IMR-90 (cell line): ENCODE measurements at regions of chr5 and their contacts with region 1.

Region 1: DNA sequence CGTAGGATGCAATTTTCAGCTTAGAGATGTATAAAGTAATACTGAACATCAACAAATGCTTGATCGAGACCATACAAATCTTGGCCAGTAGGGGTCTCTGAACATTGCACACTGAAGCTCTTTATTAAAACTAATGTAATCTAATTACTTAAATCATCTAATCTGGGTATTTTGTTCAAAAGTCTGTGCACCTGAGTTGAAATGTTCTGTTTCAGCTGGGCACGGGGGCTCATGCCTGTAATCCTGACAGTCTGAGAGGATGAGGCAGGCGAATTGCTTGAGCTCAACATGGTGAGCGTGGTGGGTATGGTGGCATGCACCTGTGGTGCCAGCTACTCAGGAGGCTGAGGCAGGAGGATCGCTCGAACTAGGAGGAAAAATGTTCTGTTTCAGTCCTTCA is 41.0 kb downstream of the ESM1 start:
- DNase-seq: peak; percentile 58
- ATAC-seq: peak; percentile 64
- H3K4me3 ChIP-seq: no peak overlapping the region
- H3K27ac ChIP-seq: no peak overlapping the region
- H3K4me1 ChIP-seq: no peaks in the 10 kb centered on the region
- H3K27me3 ChIP-seq: peaks cover 33% of the 10 kb centered on the region
- CTCF ChIP-seq: peak; percentile 76
- POLR2A ChIP-seq: no peak
- RAD21 ChIP-seq: peak; percentile 71

Region 2: GRCh38 chr5:54959673-54960418 is 15.5 kb after region 1 on chr5:
- CTCF ChIA-PET with region 1: interaction called, 13 read pairs
- POLR2A ChIA-PET with region 1: no interaction called
- dilution Hi-C with region 1: no loop called
- in situ Hi-C with region 1: no loop called
- intact Hi-C with region 1: no loop called
- DNase-seq: no peak
- ATAC-seq: no peak
- H3K4me3 ChIP-seq: no peak overlapping the region
- H3K27ac ChIP-seq: no peak overlapping the region
- H3K4me1 ChIP-seq: no peaks in the 10 kb centered on the region
- H3K27me3 ChIP-seq: peaks cover 50% of the 10 kb centered on the region
- CTCF ChIP-seq: 0 out of 2 replicates have a peak, but pooled peaks have one; percentile 22
- POLR2A ChIP-seq: no peak
- RAD21 ChIP-seq: no peak

Region 3: GRCh38 chr5:55146543-55147151 is 202.3 kb after region 1 on chr5:
- CTCF ChIA-PET with region 1: interaction called, 30 read pairs
- POLR2A ChIA-PET with region 1: no interaction called
- dilution Hi-C with region 1: loop called (anchors 25 kb)
- in situ Hi-C with region 1: loop called (anchors 5 kb)
- intact Hi-C with region 1: loop called (anchors 1 kb)
- DNase-seq: peak; percentile 82
- ATAC-seq: peak; percentile 97
- H3K4me3 ChIP-seq: no peak overlapping the region
- H3K27ac ChIP-seq: no peak overlapping the region
- H3K4me1 ChIP-seq: no peaks in the 10 kb centered on the region
- H3K27me3 ChIP-seq: peaks cover 11% of the 10 kb centered on the region
- CTCF ChIP-seq: peak; percentile 98
- POLR2A ChIP-seq: peak; percentile 56; the same call in 1 of the 2 replicates
- RAD21 ChIP-seq: peak; percentile 99

Region 4: GRCh38 chr5:55159763-55160492 is 215.6 kb after region 1 on chr5 and contains the start of gene GPX8:
- CTCF ChIA-PET with region 1: interaction called, 23 read pairs
- POLR2A ChIA-PET with region 1: no interaction called
- dilution Hi-C with region 1: no loop called
- in situ Hi-C with region 1: no loop called
- intact Hi-C with region 1: no loop called
- DNase-seq: peak; percentile 92
- ATAC-seq: peak; percentile 88
- H3K4me3 ChIP-seq: peak within 1 kb of the TSS; percentile 66
- H3K27ac ChIP-seq: peak within 1 kb of the TSS; percentile 76
- H3K4me1 ChIP-seq: peaks cover 4% of the 10 kb centered on the region
- H3K27me3 ChIP-seq: no peaks in the 10 kb centered on the region
- CTCF ChIP-seq: peak; percentile 75
- POLR2A ChIP-seq: peak; percentile 77
- RAD21 ChIP-seq: peak; percentile 86
- total RNA-seq, gene GPX8: 166 and 201 TPM in 2 replicates